Activated T-helper 2 cell treated with anti-CD3 and anti-CD28 coated beads, Interferon-gamma antibody, Interleukin-2, Interleukin-4, amounts not matched to agents 10 μg/mL and 5 μg/mL and 100 μg/mL, durations not matched to agents 14 hours and 24 hours and 36 hours (primary cell): ENCODE measurements at regions of chrX and their contacts with region 1.

Region 1: GRCh38 chrX:138745196-138745595 is 33.7 kb upstream of the FGF13 start:
- DNase-seq: no peak
- H3K4me3 Mint-ChIP-seq: no peak overlapping the region
- H3K27ac Mint-ChIP-seq: no peak overlapping the region
- H3K4me1 Mint-ChIP-seq: no peaks in the 10 kb centered on the region
- H3K27me3 Mint-ChIP-seq: no peaks in the 10 kb centered on the region

Region 2: GRCh38 chrX:138128027-138128671 is 617.0 kb before region 1 on chrX:
- intact Hi-C with region 1: loop called (anchors 5 kb)
- DNase-seq: no peak
- H3K4me3 Mint-ChIP-seq: no peak overlapping the region
- H3K27ac Mint-ChIP-seq: no peak overlapping the region
- H3K4me1 Mint-ChIP-seq: no peaks in the 10 kb centered on the region
- H3K27me3 Mint-ChIP-seq: no peaks in the 10 kb centered on the region

Region 3: GRCh38 chrX:138191998-138192397 is 553.2 kb before region 1 on chrX:
- intact Hi-C with region 1: loop called (anchors 5 kb)
- DNase-seq: no peak
- H3K4me3 Mint-ChIP-seq: no peak overlapping the region
- H3K27ac Mint-ChIP-seq: no peak overlapping the region
- H3K4me1 Mint-ChIP-seq: no peaks in the 10 kb centered on the region
- H3K27me3 Mint-ChIP-seq: no peaks in the 10 kb centered on the region